MCF 10A (cell line): ENCODE measurements at regions of chr1 and their contacts with region 1.

Region 1: DNA sequence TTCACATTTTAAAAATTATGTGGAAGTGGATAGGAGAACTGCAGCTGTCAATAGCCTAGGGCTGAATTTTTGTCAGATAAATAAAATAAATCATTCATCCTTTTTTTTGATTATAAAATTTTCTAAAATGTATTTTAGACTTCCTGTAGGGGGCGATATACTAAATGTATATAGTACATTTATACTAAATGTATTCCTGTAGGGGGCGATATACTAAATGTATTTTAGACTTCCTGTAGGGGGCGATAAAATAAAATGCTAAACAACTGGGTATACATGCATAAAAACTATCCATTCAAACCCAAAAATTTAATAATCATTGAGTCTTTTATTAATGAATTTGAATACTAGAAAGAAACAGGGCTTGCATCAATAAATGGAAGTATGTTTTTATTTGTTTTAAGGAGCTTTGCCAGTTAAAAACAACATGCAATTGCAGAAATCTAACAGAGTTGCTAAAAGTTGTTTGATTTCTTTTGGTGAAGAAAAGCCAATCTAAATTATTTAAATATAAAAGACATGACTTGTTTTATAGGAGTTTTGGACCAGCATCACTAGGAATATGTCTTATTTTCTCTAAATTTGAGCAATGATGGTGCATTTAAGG is 31.4 kb downstream of the CLCA1 start:
- DNase-seq: peak; percentile 28
- H3K4me3 Mint-ChIP-seq: no peak overlapping the region
- H3K27ac Mint-ChIP-seq: no peak overlapping the region
- H3K4me1 Mint-ChIP-seq: no peaks in the 10 kb centered on the region
- H3K27me3 Mint-ChIP-seq: peaks cover 11% of the 10 kb centered on the region
- CTCF ChIP-seq: peak; percentile 84

Region 2: DNA sequence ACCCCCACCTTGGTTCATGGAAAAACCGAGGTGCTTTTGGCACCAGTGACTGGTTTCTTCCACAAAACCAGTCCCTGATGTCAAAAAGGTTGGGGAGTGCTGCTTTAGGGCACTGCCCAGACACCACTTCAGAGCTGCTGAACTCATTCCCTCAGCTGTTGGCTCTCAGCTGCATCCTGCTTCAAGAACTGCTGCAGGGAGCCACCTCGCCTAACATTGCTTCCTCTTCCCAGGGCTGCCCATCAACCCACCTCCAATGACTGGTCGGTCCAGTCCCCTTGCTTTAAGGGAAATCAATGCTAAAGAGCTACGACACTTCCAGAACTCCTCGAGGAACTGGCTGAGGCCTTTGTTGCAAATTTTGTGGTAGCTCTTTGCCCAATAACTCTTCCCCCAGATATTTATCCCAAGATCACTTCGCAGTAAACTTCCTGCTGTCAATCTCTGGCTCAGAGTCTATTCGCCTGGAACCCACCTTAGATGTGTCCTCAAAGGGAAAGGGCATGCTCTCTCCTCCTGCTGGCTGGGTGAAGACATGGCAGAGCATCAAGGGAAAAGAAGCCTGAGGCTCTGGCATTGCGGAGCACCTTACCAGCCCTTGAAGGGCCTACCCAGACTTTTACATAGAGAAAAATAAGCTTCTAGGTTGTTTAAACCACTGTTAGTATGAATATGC is 1269.6 kb before region 1 on chr1:
- CTCF ChIA-PET with region 1: no interaction called
- POLR2A ChIA-PET with region 1: no interaction called
- intact Hi-C with region 1: no loop called
- DNase-seq: no peak
- H3K4me3 Mint-ChIP-seq: no peak overlapping the region
- H3K27ac Mint-ChIP-seq: no peak overlapping the region
- H3K4me1 Mint-ChIP-seq: no peaks in the 10 kb centered on the region
- H3K27me3 Mint-ChIP-seq: no peaks in the 10 kb centered on the region
- CTCF ChIP-seq: no peak

Region 3: GRCh38 chr1:86380257-86380861 is 119.7 kb before region 1 on chr1:
- CTCF ChIA-PET with region 1: interaction called, 23 read pairs
- POLR2A ChIA-PET with region 1: interaction called, 5 read pairs
- intact Hi-C with region 1: loop called (anchors 1 kb)
- DNase-seq: peak; percentile 73
- H3K4me3 Mint-ChIP-seq: no peak overlapping the region
- H3K27ac Mint-ChIP-seq: no peak overlapping the region
- H3K4me1 Mint-ChIP-seq: no peaks in the 10 kb centered on the region
- H3K27me3 Mint-ChIP-seq: no peaks in the 10 kb centered on the region
- CTCF ChIP-seq: peak; percentile 82

Region 4: DNA sequence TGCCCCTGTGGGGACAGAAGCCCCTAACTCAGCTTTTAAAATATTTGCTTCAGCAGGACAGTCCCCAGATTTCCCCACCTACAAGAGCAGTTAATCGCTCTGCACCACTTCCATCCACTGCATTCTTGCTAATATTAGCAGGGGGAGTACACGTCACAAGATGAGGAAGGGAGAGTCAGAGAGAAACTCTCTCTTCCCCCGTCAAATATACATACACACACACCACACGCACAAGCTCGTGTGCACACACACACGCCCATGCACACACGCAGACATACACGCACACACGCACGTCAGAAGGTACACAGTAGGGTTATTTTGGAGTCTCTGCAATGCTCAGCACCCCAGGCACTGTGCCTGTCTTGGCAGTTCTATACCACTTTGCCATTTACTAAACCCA is 29.2 kb before region 1 on chr1:
- CTCF ChIA-PET with region 1: interaction called, 77 read pairs
- POLR2A ChIA-PET with region 1: no interaction called
- intact Hi-C with region 1: no loop called
- DNase-seq: no peak
- H3K4me3 Mint-ChIP-seq: no peak overlapping the region
- H3K27ac Mint-ChIP-seq: no peak overlapping the region
- H3K4me1 Mint-ChIP-seq: no peaks in the 10 kb centered on the region
- H3K27me3 Mint-ChIP-seq: no peaks in the 10 kb centered on the region
- CTCF ChIP-seq: no peak

Region 5: DNA sequence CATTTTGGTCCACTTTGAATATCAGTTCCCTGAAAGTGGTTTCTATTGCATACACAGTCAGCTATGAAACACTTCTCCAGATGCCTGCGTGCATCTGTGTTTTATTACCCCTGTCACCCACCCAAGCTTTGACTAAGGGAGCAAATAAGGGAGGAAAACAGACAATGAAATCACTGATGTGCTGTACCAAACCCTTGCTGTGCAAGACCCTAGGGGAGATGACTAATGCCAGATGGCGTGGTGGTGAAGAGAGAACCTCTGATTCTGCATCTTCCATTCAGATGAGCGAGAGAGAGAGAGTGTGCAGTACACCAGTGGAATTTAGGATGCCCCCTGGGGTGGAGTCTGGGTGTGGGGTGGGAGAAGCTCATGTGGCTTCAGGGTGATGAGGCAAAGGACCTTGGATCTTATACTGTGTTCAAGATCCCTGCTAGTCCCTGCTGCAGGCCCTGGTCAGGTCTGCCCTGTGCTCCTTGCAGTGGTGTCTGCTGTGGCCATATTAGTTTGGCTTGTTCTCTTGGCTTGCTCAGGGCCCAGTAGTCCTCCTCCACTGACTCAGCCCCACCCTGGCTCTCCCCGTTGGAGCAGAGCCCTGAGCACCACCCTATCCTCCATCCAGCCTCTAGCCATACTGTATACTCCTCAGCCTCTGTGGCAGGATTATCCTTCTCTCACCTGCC is 12.8 kb before region 1 on chr1:
- CTCF ChIA-PET with region 1: interaction called, 58 read pairs
- POLR2A ChIA-PET with region 1: no interaction called
- intact Hi-C with region 1: no loop called
- DNase-seq: peak; percentile 18
- H3K4me3 Mint-ChIP-seq: no peak overlapping the region
- H3K27ac Mint-ChIP-seq: peak overlapping the region; percentile 21
- H3K4me1 Mint-ChIP-seq: no peaks in the 10 kb centered on the region
- H3K27me3 Mint-ChIP-seq: no peaks in the 10 kb centered on the region
- CTCF ChIP-seq: no peak

Region 6: GRCh38 chr1:86522240-86522639 is 22.1 kb after region 1 on chr1:
- CTCF ChIA-PET with region 1: interaction called, 39 read pairs
- POLR2A ChIA-PET with region 1: no interaction called
- intact Hi-C with region 1: no loop called
- DNase-seq: no peak
- H3K4me3 Mint-ChIP-seq: no peak overlapping the region
- H3K27ac Mint-ChIP-seq: no peak overlapping the region
- H3K4me1 Mint-ChIP-seq: peaks cover 4% of the 10 kb centered on the region
- H3K27me3 Mint-ChIP-seq: no peaks in the 10 kb centered on the region
- CTCF ChIP-seq: no peak

Region 7: DNA sequence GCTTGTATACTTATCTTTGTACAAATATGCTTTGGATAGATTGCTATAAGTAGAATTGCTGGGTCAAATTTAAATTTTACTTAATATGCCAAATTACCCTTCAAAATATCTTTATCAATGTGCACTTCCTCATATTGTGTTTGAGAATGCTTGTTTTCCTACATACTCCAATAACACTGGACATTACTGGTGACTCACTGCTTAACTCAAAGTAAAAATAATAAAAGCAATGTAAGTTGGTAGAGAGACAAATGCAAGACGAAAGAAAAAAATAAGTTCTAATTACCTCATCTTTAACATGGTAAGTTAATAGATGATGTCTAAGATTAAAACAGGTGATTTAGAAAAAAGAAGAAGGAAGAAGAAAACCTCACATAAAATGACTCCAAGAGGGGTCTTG is 196.4 kb after region 1 on chr1:
- CTCF ChIA-PET with region 1: interaction called, 11 read pairs
- POLR2A ChIA-PET with region 1: no interaction called
- intact Hi-C with region 1: no loop called
- DNase-seq: no peak
- H3K4me3 Mint-ChIP-seq: no peak overlapping the region
- H3K27ac Mint-ChIP-seq: peak overlapping the region; percentile 32
- H3K4me1 Mint-ChIP-seq: peaks cover 17% of the 10 kb centered on the region
- H3K27me3 Mint-ChIP-seq: no peaks in the 10 kb centered on the region
- CTCF ChIP-seq: no peak

Region 8: DNA sequence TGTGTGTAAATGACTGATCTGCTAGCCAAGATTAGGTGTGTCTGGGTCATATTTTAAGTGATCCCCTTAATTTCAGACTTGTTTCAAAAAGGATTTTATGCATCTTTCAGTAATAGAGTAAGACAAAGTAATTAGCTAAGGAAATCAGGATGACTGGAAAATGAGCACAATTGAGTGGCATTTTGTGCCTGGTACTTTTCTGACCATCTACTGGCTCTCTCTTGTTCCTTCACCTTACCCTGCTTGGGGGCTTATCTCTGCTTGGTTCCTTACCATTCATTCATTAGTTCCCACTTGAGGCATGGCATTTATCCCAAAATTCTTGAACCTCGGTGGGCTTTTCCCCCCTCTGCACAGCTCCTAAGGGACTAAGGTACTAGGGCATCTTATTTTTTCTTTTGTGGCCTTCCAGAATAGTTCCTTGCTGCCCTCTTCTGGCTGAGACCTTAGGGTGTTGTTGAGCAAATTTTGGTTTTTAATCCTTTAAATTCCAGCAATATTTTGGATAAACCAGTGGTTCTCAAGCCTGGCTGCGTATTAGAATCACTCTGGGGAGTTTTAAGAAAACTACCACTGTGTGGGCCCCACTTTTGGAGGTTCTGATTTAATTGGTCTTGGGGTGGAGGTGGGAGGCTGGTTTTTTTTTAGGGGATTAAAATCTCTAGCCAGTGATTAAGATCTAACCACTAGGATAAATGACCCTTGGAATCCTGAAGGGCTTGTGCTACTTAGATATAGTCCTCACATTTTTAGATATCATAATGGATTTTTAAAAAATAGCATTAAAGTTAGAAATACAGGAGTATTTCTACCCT is 465.1 kb after region 1 on chr1:
- CTCF ChIA-PET with region 1: no interaction called
- POLR2A ChIA-PET with region 1: no interaction called
- intact Hi-C with region 1: loop called (anchors 5 kb)
- DNase-seq: peak; percentile 48
- H3K4me3 Mint-ChIP-seq: no peak overlapping the region
- H3K27ac Mint-ChIP-seq: no peak overlapping the region
- H3K4me1 Mint-ChIP-seq: no peaks in the 10 kb centered on the region
- H3K27me3 Mint-ChIP-seq: no peaks in the 10 kb centered on the region
- CTCF ChIP-seq: peak; percentile 74